ENCODE measurements at regions of chr17 and their contacts with region 1.

Region 1: GRCh38 chr17:28951991-28952975 is 965 bp upstream of the PHF12 start:
- DNase-seq: peak; percentile 99
- ATAC-seq: peak; percentile 68
- H3K4me3 ChIP-seq: peak overlapping the region; percentile 68 to 99 (median 86)
- H3K4me3 Mint-ChIP-seq: no peak overlapping the region
- H3K27ac ChIP-seq: peak overlapping the region; percentile 97 to 98
- H3K27ac Mint-ChIP-seq: no peak overlapping the region
- H3K4me1 ChIP-seq: peaks cover 24 to 28% of the 10 kb centered on the region in 2 donors
- H3K4me1 Mint-ChIP-seq: peaks cover 17% of the 10 kb centered on the region
- H3K27me3 ChIP-seq: no peaks in the 10 kb centered on the region
- H3K27me3 Mint-ChIP-seq: no peaks in the 10 kb centered on the region
- CTCF ChIP-seq: no peak

Region 2: DNA sequence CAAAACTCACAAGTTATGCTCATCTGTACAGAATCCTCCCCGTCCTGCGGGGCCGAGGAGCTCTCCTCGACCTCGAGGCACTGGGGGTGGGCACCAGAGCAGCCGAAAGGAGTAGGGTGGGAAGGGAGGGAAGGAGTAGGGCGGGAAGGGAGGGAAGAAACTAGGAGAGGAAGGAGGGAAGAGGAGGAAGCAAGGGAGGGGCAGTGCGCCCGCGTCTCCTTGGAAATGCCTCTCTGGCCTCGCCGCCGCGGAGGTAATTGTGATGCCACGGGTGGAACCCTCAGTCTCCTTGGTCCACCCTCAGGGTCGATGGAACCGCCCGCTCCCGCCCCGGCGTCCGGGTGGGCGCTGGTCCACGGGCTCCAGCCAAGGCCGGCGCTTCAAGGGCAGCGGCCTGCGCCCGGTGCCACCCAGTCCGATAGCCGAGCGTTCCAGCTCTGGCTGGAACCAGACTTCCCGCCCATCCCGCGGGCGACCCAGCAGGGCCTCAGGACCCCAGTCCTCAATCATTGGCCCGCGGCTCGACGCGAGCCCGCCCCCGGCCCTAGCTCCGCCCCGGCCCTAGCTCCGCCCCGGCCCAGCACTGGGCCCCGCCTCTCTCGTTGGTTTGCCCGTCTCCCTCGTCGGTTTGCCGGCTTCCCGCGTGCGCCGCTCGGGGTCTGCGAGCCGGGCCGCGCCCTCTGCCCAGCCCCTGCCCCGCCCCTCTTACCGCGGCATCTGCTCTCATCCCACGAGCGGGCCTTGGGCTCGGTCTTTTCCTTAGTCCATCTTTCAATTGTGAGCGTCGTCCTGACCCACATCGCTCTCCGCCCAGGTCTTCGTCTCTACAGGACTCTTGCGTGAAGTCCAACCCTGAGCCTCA is 241.2 kb before region 1 on chr17:
- CTCF ChIA-PET with region 1: no interaction called
- POLR2A ChIA-PET with region 1: interaction called, 11 read pairs
- intact Hi-C with region 1: no loop called
- DNase-seq: peak; percentile 88
- ATAC-seq: peak; percentile 90
- H3K4me3 ChIP-seq: peak overlapping the region; percentile 54 to 88 (median 73)
- H3K4me3 Mint-ChIP-seq: peak overlapping the region; percentile 96
- H3K27ac ChIP-seq: peak overlapping the region; percentile 69 to 79
- H3K27ac Mint-ChIP-seq: peak overlapping the region; percentile 93
- H3K4me1 ChIP-seq: peaks cover 9 to 18% of the 10 kb centered on the region in 2 donors
- H3K4me1 Mint-ChIP-seq: peaks cover 19% of the 10 kb centered on the region
- H3K27me3 ChIP-seq: no peaks in the 10 kb centered on the region
- H3K27me3 Mint-ChIP-seq: no peaks in the 10 kb centered on the region
- CTCF ChIP-seq: no peak

Region 3: DNA sequence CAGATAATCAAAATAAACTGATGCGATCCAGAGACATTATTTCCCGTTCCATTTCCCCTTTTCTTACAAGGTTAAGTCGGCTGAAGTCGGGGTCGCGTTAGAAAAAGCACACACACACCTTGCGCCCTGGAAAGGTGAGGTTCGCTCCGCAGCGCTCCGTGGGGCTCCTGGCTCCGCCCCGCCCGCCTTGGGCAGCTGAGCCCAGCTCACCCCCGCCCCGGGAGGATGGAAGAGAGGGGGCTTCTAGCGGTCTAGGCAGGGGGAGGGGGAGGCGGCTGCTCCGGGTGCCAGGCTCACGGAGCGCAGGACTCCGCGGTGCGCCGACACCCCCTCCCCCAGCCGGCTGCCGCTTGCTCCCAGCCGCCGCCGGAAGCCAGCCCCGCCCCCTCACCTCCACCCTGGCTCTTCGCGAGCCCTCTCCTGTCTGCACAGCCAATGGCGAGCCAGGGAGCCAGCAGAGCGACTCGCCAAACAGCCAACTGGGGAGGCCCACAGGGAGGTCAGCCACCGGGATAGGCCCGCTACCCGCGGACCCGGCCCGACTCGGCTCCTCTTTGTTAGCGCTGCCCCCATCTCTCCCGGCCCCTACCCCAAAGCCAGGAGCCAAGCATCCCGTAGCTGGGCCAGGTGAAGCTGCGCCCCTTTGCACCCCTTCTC is 140.1 kb before region 1 on chr17:
- CTCF ChIA-PET with region 1: interaction called, 3 read pairs
- POLR2A ChIA-PET with region 1: no interaction called
- intact Hi-C with region 1: loop called (anchors 1 kb)
- DNase-seq: peak; percentile 95
- ATAC-seq: peak; percentile 99
- H3K4me3 ChIP-seq: peak overlapping the region; percentile 48 to 92 (median 77)
- H3K4me3 Mint-ChIP-seq: peak overlapping the region; percentile 92
- H3K27ac ChIP-seq: peak overlapping the region; percentile 87
- H3K27ac Mint-ChIP-seq: peak overlapping the region; percentile 92
- H3K4me1 ChIP-seq: peaks cover 12 to 16% of the 10 kb centered on the region in 2 donors
- H3K4me1 Mint-ChIP-seq: peaks cover 34% of the 10 kb centered on the region
- H3K27me3 ChIP-seq: no peaks in the 10 kb centered on the region
- H3K27me3 Mint-ChIP-seq: no peaks in the 10 kb centered on the region
- CTCF ChIP-seq: no peak

Region 4: DNA sequence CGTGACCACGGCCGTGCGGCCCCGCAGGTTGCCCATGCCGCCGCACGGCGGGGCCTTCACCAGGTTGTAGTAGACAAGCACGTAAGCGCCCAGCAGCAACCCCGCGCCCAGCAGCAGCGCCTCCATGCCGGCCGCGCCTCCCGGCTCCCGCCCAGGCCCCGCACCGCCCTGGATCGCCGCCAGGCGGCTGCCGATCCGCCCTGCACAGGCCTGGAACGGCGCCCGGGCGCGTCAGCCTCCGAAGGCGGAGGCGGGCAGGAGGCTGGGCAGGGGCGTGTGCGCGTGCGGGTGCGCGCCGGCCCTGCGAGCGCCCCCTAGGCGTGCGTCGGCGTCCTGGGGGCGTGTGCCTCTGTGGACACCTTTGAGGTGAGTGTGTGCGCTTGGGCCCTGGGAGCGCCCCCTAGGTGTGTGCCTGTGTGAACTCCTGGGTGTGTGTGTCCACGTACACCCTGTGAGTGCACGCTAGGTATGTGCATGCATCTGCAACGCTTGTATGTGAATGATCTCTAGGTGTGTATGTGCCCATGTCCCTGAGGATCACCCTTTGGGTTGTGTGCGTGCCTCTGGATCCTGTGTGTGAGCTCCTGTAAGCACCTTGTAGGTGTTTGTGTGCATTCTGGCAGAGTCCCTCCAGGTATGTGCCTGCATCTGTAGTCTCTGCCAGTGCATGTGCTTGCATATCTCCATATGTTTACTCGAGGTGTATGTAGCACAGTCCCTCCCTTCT is 49.3 kb before region 1 on chr17 and contains the start of gene DHRS13:
- CTCF ChIA-PET with region 1: interaction called, 12 read pairs
- POLR2A ChIA-PET with region 1: interaction called, 12 read pairs
- intact Hi-C with region 1: loop called (anchors 1 kb)
- DNase-seq: peak; percentile 98
- ATAC-seq: peak; percentile 90
- H3K4me3 ChIP-seq: peak within 1 kb of the TSS; percentile 68 to 90 (median 76)
- H3K4me3 Mint-ChIP-seq: peak within 1 kb of the TSS; percentile 88
- H3K27ac ChIP-seq: peak within 1 kb of the TSS; percentile 61 to 77
- H3K27ac Mint-ChIP-seq: peak within 1 kb of the TSS; percentile 88
- H3K4me1 ChIP-seq: peaks cover 18 to 32% of the 10 kb centered on the region in 2 donors
- H3K4me1 Mint-ChIP-seq: peaks cover 34% of the 10 kb centered on the region
- H3K27me3 ChIP-seq: no peaks in the 10 kb centered on the region
- H3K27me3 Mint-ChIP-seq: no peaks in the 10 kb centered on the region
- CTCF ChIP-seq: peak; percentile 100
- total RNA-seq, gene DHRS13: 27.1 and 28.1 TPM in 2 replicates

Region 5: GRCh38 chr17:29116804-29117772 is 164.8 kb after region 1 on chr17:
- CTCF ChIA-PET with region 1: interaction called, 14 read pairs
- POLR2A ChIA-PET with region 1: no interaction called
- intact Hi-C with region 1: no loop called
- DNase-seq: peak; percentile 77
- ATAC-seq: peak; percentile 70
- H3K4me3 ChIP-seq: no peak overlapping the region
- H3K4me3 Mint-ChIP-seq: no peak overlapping the region
- H3K27ac ChIP-seq: no peak overlapping the region
- H3K27ac Mint-ChIP-seq: no peak overlapping the region
- H3K4me1 ChIP-seq: no peaks in the 10 kb centered on the region
- H3K4me1 Mint-ChIP-seq: peaks cover 5% of the 10 kb centered on the region
- H3K27me3 ChIP-seq: no peaks in the 10 kb centered on the region
- H3K27me3 Mint-ChIP-seq: no peaks in the 10 kb centered on the region
- CTCF ChIP-seq: peak; percentile 95

Region 6: GRCh38 chr17:29189355-29189754 is 237.1 kb after region 1 on chr17:
- CTCF ChIA-PET with region 1: no interaction called
- POLR2A ChIA-PET with region 1: no interaction called
- intact Hi-C with region 1: no loop called
- DNase-seq: no peak
- ATAC-seq: no peak
- H3K4me3 ChIP-seq: no peak overlapping the region
- H3K4me3 Mint-ChIP-seq: no peak overlapping the region
- H3K27ac ChIP-seq: no peak overlapping the region
- H3K27ac Mint-ChIP-seq: no peak overlapping the region
- H3K4me1 ChIP-seq: no peaks in the 10 kb centered on the region
- H3K4me1 Mint-ChIP-seq: no peaks in the 10 kb centered on the region
- H3K27me3 ChIP-seq: no peaks in the 10 kb centered on the region
- H3K27me3 Mint-ChIP-seq: peaks cover 6% of the 10 kb centered on the region
- CTCF ChIP-seq: no peak

Measured in B cell (primary cell).